Activated CD4-positive, alpha-beta memory T cell treated with anti-CD3 and anti-CD28 coated beads for 36 hours (primary cell): ENCODE measurements at regions of chr3 and their contacts with region 1.

Region 1: DNA sequence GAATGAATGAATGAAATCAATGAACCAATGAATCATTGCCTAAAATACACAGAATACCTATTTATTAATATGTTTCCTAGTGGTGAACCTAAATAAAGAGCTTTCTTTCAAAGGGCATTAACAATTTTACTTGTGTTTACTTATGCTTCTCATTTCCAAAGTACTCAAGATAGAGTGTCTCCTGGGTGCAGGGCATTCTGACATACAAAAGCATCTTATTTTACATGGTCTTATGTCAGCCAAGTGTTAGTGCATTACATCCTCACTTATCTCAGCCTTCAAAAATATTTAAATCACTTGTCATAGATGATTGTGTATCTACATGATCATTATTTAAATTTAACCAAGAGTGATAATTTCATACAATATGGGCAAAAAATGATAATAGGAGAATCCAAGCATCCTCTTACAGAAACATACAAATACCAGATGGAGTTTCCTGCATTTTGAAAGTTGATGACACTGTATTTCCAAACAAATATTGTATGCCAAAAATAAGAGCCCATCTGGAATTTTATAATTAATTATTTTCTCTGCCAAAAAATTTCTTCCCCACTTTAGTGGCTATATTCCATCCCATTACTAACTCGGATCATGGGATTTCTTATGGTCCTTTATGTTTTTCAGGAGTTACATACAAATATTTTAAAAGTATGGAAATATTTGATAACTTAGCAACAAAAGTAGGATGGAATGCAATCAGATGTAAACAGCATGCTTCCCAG is 279.0 kb downstream of the RBMS3 start:
- DNase-seq: no peak
- H3K4me3 Mint-ChIP-seq: no peak overlapping the region
- H3K27ac Mint-ChIP-seq: no peak overlapping the region
- H3K4me1 Mint-ChIP-seq: no peaks in the 10 kb centered on the region
- H3K27me3 Mint-ChIP-seq: no peaks in the 10 kb centered on the region

Region 2: DNA sequence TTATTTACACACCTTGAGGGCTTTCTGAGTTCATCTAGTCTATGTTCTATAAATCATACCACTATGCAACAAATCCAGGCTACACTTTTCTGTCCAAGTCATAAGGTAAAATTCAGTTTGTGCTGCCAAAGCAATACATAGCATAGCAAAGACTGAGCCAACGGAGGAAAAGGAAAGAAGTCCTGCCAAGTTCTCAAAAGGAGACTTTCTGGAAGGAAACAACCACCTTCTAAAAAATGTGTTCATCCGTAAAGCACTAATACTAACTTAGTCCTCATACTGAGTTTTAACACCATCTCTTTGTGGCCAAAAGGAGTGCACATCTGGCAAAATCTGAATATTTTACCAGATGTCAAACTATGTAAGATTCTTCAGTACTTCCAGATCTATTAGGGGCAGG is 341.2 kb after region 1 on chr3:
- CTCF ChIA-PET with region 1: no interaction called
- POLR2A ChIA-PET with region 1: no interaction called
- intact Hi-C with region 1: loop called (anchors 10 kb)
- DNase-seq: no peak
- H3K4me3 Mint-ChIP-seq: no peak overlapping the region
- H3K27ac Mint-ChIP-seq: no peak overlapping the region
- H3K4me1 Mint-ChIP-seq: no peaks in the 10 kb centered on the region
- H3K27me3 Mint-ChIP-seq: no peaks in the 10 kb centered on the region